Dendritic cell treated with granulocyte-macrophage colony-stimulating factor and Interleukin-4, amounts not matched to agents 40 ng/mL and 50 ng/mL, for 4 days (primary cell): ENCODE measurements at regions of chr11 and their contacts with region 1.

Region 1: GRCh38 chr11:19076744-19077589 is 16.4 kb upstream of the MRGPRX2 start:
- H3K4me3 Mint-ChIP-seq: no peak overlapping the region
- H3K27ac Mint-ChIP-seq: no peak overlapping the region
- H3K4me1 Mint-ChIP-seq: no peaks in the 10 kb centered on the region
- H3K27me3 Mint-ChIP-seq: peaks cover 6% of the 10 kb centered on the region

Region 2: DNA sequence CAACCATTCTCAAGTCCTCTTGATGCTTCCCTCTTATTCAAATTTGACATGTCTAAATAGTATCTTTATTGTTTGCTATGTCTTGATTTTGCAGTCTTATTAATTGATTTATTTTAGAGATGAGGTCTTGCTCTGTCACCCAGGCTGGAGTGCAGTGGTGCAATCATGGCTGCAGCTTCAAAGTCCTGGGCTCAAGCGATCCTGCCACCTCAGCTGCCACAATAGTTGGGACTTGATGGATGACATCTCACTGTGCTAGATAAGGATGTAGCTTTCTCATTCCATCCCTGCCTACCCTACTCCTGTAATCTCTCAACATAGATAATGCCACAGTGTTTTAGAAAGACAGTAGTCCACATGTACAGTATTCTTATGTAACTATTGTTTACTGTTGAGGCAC is 435.3 kb before region 1 on chr11:
- intact Hi-C with region 1: no loop called
- H3K4me3 Mint-ChIP-seq: no peak overlapping the region
- H3K27ac Mint-ChIP-seq: no peak overlapping the region
- H3K4me1 Mint-ChIP-seq: no peaks in the 10 kb centered on the region
- H3K27me3 Mint-ChIP-seq: peaks cover 34% of the 10 kb centered on the region

Region 3: GRCh38 chr11:19240420-19241259 is 163.7 kb after region 1 on chr11 and contains the start of gene E2F8:
- intact Hi-C with region 1: loop called (anchors 5 kb)
- H3K4me3 Mint-ChIP-seq: peak within 1 kb of the TSS; percentile 92
- H3K27ac Mint-ChIP-seq: peak within 1 kb of the TSS; percentile 33
- H3K4me1 Mint-ChIP-seq: peaks cover 32% of the 10 kb centered on the region
- H3K27me3 Mint-ChIP-seq: peaks cover 13% of the 10 kb centered on the region